Natural killer cell (primary cell): ENCODE measurements at regions of chr9 and their contacts with region 1.

Region 1: GRCh38 chr9:104093647-104094533 is at the start of gene SMC2:
- DNase-seq: peak; percentile 91 to 96
- ATAC-seq: peak; percentile 94 to 98 (median 96)
- H3K4me3 ChIP-seq: peak within 1 kb of the TSS; percentile 77
- H3K4me3 Mint-ChIP-seq: peak within 1 kb of the TSS; percentile 98
- H3K27ac ChIP-seq: peak within 1 kb of the TSS; percentile 95
- H3K27ac Mint-ChIP-seq: peak within 1 kb of the TSS; percentile 95
- H3K4me1 ChIP-seq: peaks cover 6% of the 10 kb centered on the region
- H3K4me1 Mint-ChIP-seq: peaks cover 17 to 34% of the 10 kb centered on the region in 2 donors
- H3K27me3 ChIP-seq: no peaks in the 10 kb centered on the region
- H3K27me3 Mint-ChIP-seq: peaks cover 3 to 13% of the 10 kb centered on the region in 2 donors
- CTCF ChIP-seq: no peak
- total RNA-seq, gene SMC2: 6.7 to 9.9 (median 9.5) TPM

Region 2: DNA sequence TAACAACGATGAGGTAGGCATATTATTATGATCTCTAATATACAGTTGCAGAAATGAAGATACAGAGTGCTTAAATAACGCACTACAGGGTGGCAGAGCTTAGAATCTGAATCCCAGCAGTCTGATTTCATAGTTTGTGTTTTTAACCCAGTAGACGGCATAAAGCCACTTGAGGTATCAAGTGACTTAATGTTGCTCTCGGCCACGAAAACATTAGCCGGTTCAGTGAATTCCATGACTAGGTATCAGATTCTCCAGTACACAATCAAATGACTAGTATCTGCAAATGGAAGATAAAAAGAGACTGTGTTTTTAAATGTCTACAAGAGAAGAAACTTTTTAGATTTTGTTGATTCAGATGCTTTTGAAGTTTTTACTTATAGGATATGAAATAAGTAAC is 25.0 kb after region 1 on chr9:
- intact Hi-C with region 1: no loop called
- DNase-seq: no peak
- ATAC-seq: no peak
- H3K4me3 ChIP-seq: no peak overlapping the region
- H3K4me3 Mint-ChIP-seq: no peak overlapping the region
- H3K27ac ChIP-seq: no peak overlapping the region
- H3K27ac Mint-ChIP-seq: no peak overlapping the region
- H3K4me1 ChIP-seq: no peaks in the 10 kb centered on the region
- H3K4me1 Mint-ChIP-seq: no peaks in the 10 kb centered on the region
- H3K27me3 ChIP-seq: no peaks in the 10 kb centered on the region
- H3K27me3 Mint-ChIP-seq: no peaks in the 10 kb centered on the region
- CTCF ChIP-seq: no peak

Region 3: DNA sequence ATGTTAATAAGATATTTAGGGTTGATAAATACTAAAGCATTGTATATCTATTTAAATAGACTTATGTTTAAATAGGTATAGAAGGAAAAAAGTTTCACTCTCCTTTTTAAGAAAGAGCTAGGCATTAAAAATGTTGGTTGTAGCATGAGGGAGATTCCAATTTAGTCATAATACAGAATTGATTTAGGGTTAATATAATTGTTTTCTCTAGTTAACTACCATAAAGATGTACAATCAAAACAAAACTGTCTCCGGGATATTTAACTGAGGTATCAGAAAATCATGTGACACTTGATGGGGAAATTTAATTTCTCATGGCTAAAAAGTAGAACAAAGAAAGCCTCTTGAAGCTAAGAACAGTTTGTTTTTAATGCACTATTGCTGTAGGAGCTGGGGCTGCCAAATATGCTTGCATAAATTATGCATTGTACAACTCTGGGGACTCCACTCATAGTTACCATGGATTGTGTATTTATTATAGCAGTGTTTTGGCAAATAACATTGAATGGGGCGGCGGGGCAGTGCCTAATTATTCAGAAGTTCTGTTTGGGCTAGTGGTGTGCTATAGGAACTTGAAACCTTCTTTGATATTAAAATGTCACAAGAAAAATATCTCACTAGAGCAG is 44.5 kb after region 1 on chr9:
- intact Hi-C with region 1: no loop called
- DNase-seq: no peak
- ATAC-seq: no peak
- H3K4me3 ChIP-seq: no peak overlapping the region
- H3K4me3 Mint-ChIP-seq: no peak overlapping the region
- H3K27ac ChIP-seq: no peak overlapping the region
- H3K27ac Mint-ChIP-seq: no peak overlapping the region
- H3K4me1 ChIP-seq: no peaks in the 10 kb centered on the region
- H3K4me1 Mint-ChIP-seq: no peaks in the 10 kb centered on the region
- H3K27me3 ChIP-seq: no peaks in the 10 kb centered on the region
- H3K27me3 Mint-ChIP-seq: no peaks in the 10 kb centered on the region
- CTCF ChIP-seq: no peak

Region 4: GRCh38 chr9:104747558-104748358 is 653.9 kb after region 1 on chr9 and contains the start of gene NIPSNAP3A:
- intact Hi-C with region 1: loop called (anchors 10 kb)
- DNase-seq: peak; percentile 80 to 94
- ATAC-seq: peak; percentile 81 to 90 (median 84)
- H3K4me3 ChIP-seq: peak within 1 kb of the TSS; percentile 94
- H3K4me3 Mint-ChIP-seq: peak within 1 kb of the TSS; percentile 97
- H3K27ac ChIP-seq: peak within 1 kb of the TSS; percentile 93
- H3K27ac Mint-ChIP-seq: peak within 1 kb of the TSS; percentile 93 to 97
- H3K4me1 ChIP-seq: peaks cover 8% of the 10 kb centered on the region
- H3K4me1 Mint-ChIP-seq: peaks cover 19 to 25% of the 10 kb centered on the region in 2 donors
- H3K27me3 ChIP-seq: no peaks in the 10 kb centered on the region
- H3K27me3 Mint-ChIP-seq: no peaks in the 10 kb centered on the region
- CTCF ChIP-seq: no peak
- total RNA-seq, gene NIPSNAP3A: 9.0 to 11.2 (median 9.8) TPM

Region 5: GRCh38 chr9:105244003-105244733 is 1150.3 kb after region 1 on chr9 and contains the start of gene SLC44A1:
- intact Hi-C with region 1: loop called (anchors 10 kb)
- DNase-seq: peak; percentile 82 to 94
- ATAC-seq: peak; percentile 81 to 92 (median 86)
- H3K4me3 ChIP-seq: peak within 1 kb of the TSS; percentile 70
- H3K4me3 Mint-ChIP-seq: peak within 1 kb of the TSS; percentile 95
- H3K27ac ChIP-seq: peak within 1 kb of the TSS; percentile 54
- H3K27ac Mint-ChIP-seq: peak within 1 kb of the TSS; percentile 74 to 95
- H3K4me1 ChIP-seq: peaks cover 12% of the 10 kb centered on the region
- H3K4me1 Mint-ChIP-seq: peaks cover 29 to 36% of the 10 kb centered on the region in 2 donors
- H3K27me3 ChIP-seq: peaks cover 8% of the 10 kb centered on the region
- H3K27me3 Mint-ChIP-seq: peaks cover 15 to 30% of the 10 kb centered on the region in 2 donors
- CTCF ChIP-seq: no peak
- total RNA-seq, gene SLC44A1: 7.1 to 8.3 (median 7.9) TPM